ENCODE measurements at regions of chr6 and their contacts with region 1.

Region 1: DNA sequence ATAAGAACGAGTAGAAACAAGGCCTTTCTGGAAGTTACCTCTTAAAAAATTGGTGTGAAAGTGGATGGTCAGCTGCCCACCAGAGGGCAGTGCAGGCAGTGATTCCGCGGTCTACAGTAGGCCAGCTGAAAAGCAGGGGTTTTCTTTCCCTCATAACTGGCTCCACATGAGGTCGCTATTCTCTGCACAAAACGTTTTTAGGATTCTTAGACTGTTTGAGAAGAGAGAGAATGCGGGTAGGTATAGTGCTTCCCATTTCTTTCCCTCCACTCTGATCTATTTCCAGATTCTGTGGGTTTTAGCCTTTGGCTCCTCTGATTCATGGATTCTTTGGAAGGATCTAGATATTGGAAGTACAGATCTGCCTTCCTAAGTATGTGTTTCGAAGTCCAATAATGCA is 14.2 kb downstream of the FIG4 start:
- DNase-seq: peak; percentile 79 to 82
- H3K4me3 ChIP-seq: no peak overlapping the region
- H3K27ac ChIP-seq: no peak overlapping the region
- H3K4me1 ChIP-seq: no peaks in the 10 kb centered on the region
- H3K27me3 ChIP-seq: no peaks in the 10 kb centered on the region
- CTCF ChIP-seq: peak; percentile 89 to 100 (median 94)
- POLR2A ChIP-seq: no peak

Region 2: GRCh38 chr6:110053395-110054240 is 348.4 kb after region 1 on chr6:
- intact Hi-C with region 1: loop called (anchors 5 kb)
- DNase-seq: peak; percentile 10 to 34
- H3K4me3 ChIP-seq: no peak overlapping the region
- H3K27ac ChIP-seq: no peak overlapping the region
- H3K4me1 ChIP-seq: no peaks in the 10 kb centered on the region
- H3K27me3 ChIP-seq: no peaks in the 10 kb centered on the region
- CTCF ChIP-seq: peak; percentile 20 to 73 (median 67)
- POLR2A ChIP-seq: no peak